ENCODE measurements at regions of chr12 and their contacts with region 1.

Region 1: DNA sequence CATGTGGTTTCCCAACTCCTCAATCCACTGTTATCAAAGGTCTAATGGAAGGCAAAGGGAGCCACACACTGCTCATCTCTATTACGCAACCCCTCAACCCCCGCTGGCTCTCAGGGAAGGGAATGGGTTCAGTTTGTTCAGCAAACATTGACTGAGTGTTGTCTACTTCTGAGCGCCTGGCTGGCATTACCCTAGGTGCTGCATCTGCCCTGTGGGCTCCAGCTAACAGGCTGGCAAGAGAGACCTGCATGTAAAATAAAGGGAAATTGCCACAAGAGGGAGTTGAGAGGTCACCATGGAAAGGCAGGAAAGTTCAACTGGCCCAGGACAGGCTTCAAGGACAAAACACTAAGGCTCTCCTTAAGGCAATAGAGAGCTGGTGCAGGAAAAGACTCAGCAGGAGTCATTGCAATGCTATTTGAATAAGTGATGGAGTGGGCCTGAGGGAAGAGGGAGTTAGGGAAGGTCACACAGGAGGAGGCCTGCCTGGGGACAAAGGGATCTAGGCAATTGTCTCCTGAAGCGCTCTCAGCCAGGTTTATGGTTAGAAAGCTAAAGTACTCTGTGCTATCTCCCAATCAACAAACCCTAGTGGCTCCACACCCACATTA is 5.5 kb upstream of the ZNF740 start:
- DNase-seq: peak; percentile 63
- ATAC-seq: peak; percentile 97
- H3K4me3 Mint-ChIP-seq: no peak overlapping the region
- H3K27ac Mint-ChIP-seq: no peak overlapping the region
- H3K4me1 Mint-ChIP-seq: peaks cover 23% of the 10 kb centered on the region
- H3K27me3 Mint-ChIP-seq: peaks cover 100% of the 10 kb centered on the region
- CTCF ChIP-seq: no peak

Region 2: DNA sequence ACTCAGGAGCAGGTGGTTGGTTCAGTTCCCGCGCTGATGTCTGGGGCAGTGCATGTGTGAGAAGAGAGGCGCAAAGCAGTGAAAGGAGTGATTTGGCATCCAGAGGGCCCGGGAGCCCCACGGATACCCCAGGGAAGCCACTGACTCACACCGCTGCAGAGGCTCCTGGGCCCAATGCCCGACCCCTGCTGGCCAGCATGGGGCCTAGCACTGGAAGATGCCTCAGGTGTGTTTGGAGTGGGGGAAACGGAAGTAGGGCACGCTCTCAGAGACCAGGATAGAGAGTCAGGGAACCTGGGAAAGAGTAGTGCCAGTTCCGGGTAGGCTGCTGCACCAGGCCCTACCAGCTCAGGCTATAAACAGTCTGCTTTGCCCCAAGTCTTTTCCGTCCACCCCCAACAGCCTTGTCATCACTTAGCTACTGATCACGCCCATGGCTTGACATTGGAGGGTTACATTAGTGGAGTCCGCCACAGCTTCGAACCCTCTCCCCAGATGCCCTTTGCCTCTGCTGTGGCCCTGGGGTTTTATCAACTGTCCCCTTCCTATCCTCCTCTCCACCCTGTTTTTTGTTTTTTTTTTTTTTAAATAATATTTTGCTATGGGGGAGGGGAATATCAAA is 15.2 kb after region 1 on chr12:
- CTCF ChIA-PET with region 1: interaction called, 23 read pairs
- POLR2A ChIA-PET with region 1: interaction called, 3 read pairs
- DNase-seq: peak; percentile 78
- ATAC-seq: peak; percentile 97
- H3K4me3 Mint-ChIP-seq: no peak overlapping the region
- H3K27ac Mint-ChIP-seq: no peak overlapping the region
- H3K4me1 Mint-ChIP-seq: peaks cover 16% of the 10 kb centered on the region
- H3K27me3 Mint-ChIP-seq: peaks cover 35% of the 10 kb centered on the region
- CTCF ChIP-seq: peak; percentile 53; the same call in 1 of the 2 replicates

Region 3: DNA sequence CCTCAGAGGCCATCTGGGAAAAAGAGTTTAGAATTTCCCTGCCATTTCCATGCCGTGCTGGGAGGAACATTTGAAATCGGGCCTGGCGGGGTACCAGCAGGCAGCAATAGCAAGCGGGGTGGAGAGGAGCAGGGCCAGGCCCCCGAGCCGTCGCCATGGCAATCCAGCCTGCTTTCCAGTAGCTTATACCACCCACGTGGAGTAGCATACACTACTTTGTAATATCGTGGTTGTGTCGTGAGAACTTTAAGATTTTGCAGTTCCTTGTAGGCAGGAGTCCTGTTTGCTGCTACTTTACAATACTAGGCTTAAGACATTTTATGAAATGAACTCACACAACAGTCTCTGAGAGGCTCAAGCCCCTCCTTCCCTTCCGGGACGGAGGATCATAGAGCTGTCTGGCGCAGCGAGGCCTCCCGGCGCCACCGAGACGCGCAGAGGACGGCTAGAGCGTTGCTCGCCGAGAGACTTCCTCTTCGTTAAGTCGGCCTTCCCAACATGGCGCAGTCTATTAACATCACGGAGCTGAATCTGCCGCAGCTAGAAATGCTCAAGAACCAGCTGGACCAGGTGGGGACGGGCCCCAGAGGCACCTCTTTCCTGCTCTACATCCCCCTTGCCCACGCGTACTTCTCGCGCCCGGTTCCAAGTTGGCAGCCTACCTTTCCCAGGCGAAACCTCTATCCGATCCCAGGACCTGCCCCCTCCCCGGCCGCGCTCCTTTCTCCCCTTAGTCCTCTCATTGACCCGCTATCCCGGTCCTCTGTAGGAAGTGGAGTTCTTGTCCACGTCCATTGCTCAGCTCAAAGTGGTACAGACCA is 120.3 kb after region 1 on chr12 and contains the start of gene PFDN5:
- CTCF ChIA-PET with region 1: interaction called, 13 read pairs
- POLR2A ChIA-PET with region 1: interaction called, 9 read pairs
- DNase-seq: peak; percentile 85
- ATAC-seq: peak; percentile 85
- H3K4me3 Mint-ChIP-seq: peak within 1 kb of the TSS; percentile 99
- H3K27ac Mint-ChIP-seq: peak within 1 kb of the TSS; percentile 96
- H3K4me1 Mint-ChIP-seq: peaks cover 18% of the 10 kb centered on the region
- H3K27me3 Mint-ChIP-seq: no peaks in the 10 kb centered on the region
- CTCF ChIP-seq: no peak
- total RNA-seq, gene PFDN5: 263 to 286 TPM (median 270 TPM) in 3 replicates